K562 (cell line): ENCODE measurements at regions of chr14 and their contacts with region 1.

Region 1: GRCh38 chr14:23665375-23666192 is 29.4 kb downstream of the DHRS2 start:
- DNase-seq: peak in 2 of 4 experiments; percentile 17 to 43
- ATAC-seq: peak; percentile 82
- H3K4me3 ChIP-seq: no peak overlapping the region
- H3K27ac ChIP-seq: no peak overlapping the region
- H3K4me1 ChIP-seq: no peaks in the 10 kb centered on the region
- H3K27me3 ChIP-seq: peaks cover 0 to 6% of the 10 kb centered on the region in 2 experiments; a peak in 2 of 5 replicates
- CTCF ChIP-seq: peak; percentile 43 to 65 (median 52); a peak in 5 of 6 replicates
- EP300 ChIP-seq: no peak
- POLR2A ChIP-seq: no peak
- RAD21 ChIP-seq: peak; percentile 50 to 70

Region 2: GRCh38 chr14:23719225-23719946 is 53.8 kb after region 1 on chr14:
- CTCF ChIA-PET with region 1: no interaction called
- POLR2A ChIA-PET with region 1: no interaction called
- in situ Hi-C with region 1: no loop called
- intact Hi-C with region 1: loop called (anchors 5 kb)
- DNase-seq: no peak
- ATAC-seq: no peak
- H3K4me3 ChIP-seq: no peak overlapping the region
- H3K27ac ChIP-seq: no peak overlapping the region
- H3K4me1 ChIP-seq: no peaks in the 10 kb centered on the region; a peak in 1 of 5 replicates
- H3K27me3 ChIP-seq: no peaks in the 10 kb centered on the region
- CTCF ChIP-seq: no peak
- EP300 ChIP-seq: no peak
- POLR2A ChIP-seq: no peak
- RAD21 ChIP-seq: no peak